OCI-LY7 (cell line): ENCODE measurements at regions of chr7 and their contacts with region 1.

Region 1: DNA sequence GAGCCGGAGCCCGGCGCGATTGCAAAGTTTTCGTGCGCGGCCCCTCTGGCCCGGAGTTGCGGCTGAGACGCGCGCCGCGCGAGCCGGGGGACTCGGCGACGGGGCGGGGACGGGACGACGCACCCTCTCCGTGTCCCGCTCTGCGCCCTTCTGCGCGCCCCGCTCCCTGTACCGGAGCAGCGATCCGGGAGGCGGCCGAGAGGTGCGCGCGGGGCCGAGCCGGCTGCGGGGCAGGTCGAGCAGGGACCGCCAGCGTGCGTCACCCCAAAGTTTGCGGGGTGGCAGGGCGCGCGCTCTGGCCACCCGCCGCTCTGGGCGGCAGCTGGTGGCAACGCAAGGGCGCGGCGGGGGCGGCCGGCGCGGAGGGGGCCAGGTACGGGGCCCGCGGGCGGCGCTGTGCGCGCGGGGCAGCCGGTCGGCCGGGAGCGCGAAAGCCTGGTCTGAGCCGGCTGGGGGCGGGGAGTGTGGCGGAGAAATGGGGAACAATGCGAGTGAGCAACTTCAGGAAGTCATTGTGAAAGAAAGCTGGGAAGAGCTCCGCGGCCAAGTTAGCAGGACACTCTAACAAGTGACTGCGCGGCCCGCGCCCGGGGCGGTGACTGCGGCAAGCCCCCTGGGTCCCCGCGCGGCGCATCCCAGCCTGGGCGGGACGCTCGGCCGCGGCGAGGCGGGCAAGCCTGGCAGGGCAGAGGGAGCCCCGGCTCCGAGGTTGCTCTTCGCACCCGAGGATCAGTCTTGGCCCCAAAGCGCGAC is at the start of gene IKZF1:
- DNase-seq: peak; percentile 70
- H3K4me3 ChIP-seq: peak within 1 kb of the TSS; percentile 71
- H3K27ac ChIP-seq: peak within 1 kb of the TSS; percentile 86
- H3K4me1 ChIP-seq: peaks cover 32% of the 10 kb centered on the region
- CTCF ChIP-seq: no peak
- total RNA-seq, gene IKZF1: 90.0 and 108 TPM in 2 replicates

Region 2: GRCh38 chr7:49894543-49894942 is 409.8 kb before region 1 on chr7:
- CTCF ChIA-PET with region 1: no interaction called
- POLR2A ChIA-PET with region 1: no interaction called
- intact Hi-C with region 1: no loop called
- DNase-seq: no peak
- H3K4me3 ChIP-seq: no peak overlapping the region
- H3K27ac ChIP-seq: no peak overlapping the region
- H3K4me1 ChIP-seq: peaks cover 3% of the 10 kb centered on the region
- CTCF ChIP-seq: no peak

Region 3: GRCh38 chr7:50056131-50056530 is 248.2 kb before region 1 on chr7:
- CTCF ChIA-PET with region 1: no interaction called
- POLR2A ChIA-PET with region 1: no interaction called
- intact Hi-C with region 1: no loop called
- DNase-seq: no peak
- H3K4me3 ChIP-seq: no peak overlapping the region
- H3K27ac ChIP-seq: no peak overlapping the region
- H3K4me1 ChIP-seq: no peaks in the 10 kb centered on the region
- CTCF ChIP-seq: no peak

Region 4: DNA sequence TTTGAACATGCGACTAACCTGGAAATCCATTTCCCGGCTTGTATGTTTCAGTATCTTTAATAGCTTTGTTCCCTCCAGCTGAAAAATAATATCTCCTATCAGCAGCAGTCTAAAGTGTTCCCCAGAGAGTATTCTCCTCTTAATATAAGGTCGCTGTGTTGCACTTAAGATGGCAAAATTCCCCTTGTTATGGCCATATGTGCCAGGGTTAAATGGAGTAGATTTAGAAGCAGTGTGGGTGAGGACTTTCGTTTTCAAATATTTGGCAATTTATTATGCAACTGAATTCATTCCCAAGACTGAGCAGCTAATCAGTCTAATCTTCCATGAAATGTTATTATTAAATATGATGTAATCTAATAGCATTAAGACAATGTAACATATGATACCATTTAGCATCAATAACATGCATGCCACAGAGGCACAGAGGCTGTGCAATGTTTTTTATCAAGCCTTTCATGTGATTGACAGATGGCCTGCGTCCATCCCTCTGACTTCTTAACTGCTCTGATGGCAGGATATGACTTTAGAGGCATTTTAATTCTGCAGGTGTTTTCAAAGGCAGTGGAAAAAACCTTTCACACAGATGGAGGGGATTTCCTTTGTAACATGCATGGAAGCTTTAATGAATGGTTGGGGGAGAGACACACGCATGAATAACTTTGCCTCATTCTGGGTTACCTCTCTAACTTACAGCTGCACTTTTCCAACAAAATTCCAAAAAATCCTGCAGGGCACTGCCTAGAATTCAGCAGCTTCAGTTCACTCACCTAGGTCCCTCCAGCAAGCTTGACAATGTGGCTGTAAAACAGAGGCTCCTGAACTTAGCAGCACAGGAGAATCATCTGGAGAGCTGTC is 156.2 kb before region 1 on chr7:
- CTCF ChIA-PET with region 1: interaction called, 3 read pairs
- POLR2A ChIA-PET with region 1: interaction called, 293 read pairs
- intact Hi-C with region 1: loop called (anchors 1 kb)
- DNase-seq: peak; percentile 97
- H3K4me3 ChIP-seq: peak overlapping the region; percentile 52
- H3K27ac ChIP-seq: peak overlapping the region; percentile 99
- H3K4me1 ChIP-seq: peaks cover 99% of the 10 kb centered on the region
- CTCF ChIP-seq: no peak

Region 5: GRCh38 chr7:50266635-50267386 is 37.5 kb before region 1 on chr7:
- CTCF ChIA-PET with region 1: interaction called, 4 read pairs
- POLR2A ChIA-PET with region 1: interaction called, 17 read pairs
- intact Hi-C with region 1: loop called (anchors 1 kb)
- DNase-seq: peak; percentile 76
- H3K4me3 ChIP-seq: peak overlapping the region; percentile 29
- H3K27ac ChIP-seq: peak overlapping the region; percentile 85
- H3K4me1 ChIP-seq: peaks cover 100% of the 10 kb centered on the region
- CTCF ChIP-seq: no peak

Region 6: GRCh38 chr7:50317221-50317678 is 12.9 kb after region 1 on chr7:
- CTCF ChIA-PET with region 1: no interaction called
- POLR2A ChIA-PET with region 1: interaction called, 23 read pairs
- intact Hi-C with region 1: no loop called
- DNase-seq: no peak
- H3K4me3 ChIP-seq: peak overlapping the region; percentile 0
- H3K27ac ChIP-seq: peak overlapping the region; percentile 10
- H3K4me1 ChIP-seq: peaks cover 73% of the 10 kb centered on the region
- CTCF ChIP-seq: peak; percentile 25; the same call in 1 of the 2 replicates

Region 7: DNA sequence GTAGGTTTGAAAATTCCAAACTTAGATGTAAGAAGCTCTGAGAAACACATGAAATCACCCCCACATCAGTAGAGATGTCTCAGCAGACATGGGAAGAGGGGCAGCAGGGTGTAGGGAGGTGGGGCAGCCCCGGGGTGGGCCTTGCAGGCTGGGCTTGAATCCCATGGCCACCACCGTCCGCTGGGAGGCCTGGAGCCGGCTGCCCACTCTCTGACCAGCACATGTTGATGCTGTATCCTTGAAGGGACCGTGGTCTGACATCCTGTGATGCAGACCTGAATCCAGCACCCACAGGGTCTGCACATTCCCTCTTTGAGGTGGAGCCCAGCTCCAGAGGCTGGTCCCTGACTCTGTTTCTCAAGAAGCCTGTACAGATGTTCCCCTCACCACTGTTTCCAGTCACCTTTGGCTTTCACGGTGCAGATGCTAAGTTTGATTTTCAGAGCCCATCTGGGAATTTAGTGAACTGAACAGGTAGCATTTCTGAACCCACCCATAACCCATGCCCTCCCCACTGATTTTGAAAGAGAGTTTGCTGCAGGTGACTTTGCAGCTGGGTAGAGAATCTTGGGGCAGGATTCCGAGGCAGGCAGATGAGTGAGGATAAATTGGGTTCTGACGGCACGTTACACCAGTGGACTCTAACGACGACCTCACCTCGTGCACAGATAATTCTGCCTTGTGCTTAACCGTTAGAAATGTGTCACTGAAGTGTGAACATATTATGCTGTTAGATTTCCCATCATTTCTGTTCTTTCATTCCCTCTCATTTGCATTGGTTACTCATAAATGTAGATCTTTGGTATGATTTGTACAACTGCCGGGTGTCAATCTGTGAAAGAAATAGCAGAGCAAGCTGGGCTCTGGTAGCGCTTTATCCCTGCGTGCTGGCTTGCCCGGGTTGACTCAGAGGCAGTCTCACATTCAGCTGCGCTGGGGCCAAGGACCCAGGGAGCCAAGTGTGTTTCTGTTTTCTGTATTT is 45.9 kb after region 1 on chr7:
- CTCF ChIA-PET with region 1: no interaction called
- POLR2A ChIA-PET with region 1: interaction called, 28 read pairs
- intact Hi-C with region 1: no loop called
- DNase-seq: no peak
- H3K4me3 ChIP-seq: peak overlapping the region; percentile 12
- H3K27ac ChIP-seq: peak overlapping the region; percentile 42
- H3K4me1 ChIP-seq: peaks cover 57% of the 10 kb centered on the region
- CTCF ChIP-seq: no peak

Region 8: DNA sequence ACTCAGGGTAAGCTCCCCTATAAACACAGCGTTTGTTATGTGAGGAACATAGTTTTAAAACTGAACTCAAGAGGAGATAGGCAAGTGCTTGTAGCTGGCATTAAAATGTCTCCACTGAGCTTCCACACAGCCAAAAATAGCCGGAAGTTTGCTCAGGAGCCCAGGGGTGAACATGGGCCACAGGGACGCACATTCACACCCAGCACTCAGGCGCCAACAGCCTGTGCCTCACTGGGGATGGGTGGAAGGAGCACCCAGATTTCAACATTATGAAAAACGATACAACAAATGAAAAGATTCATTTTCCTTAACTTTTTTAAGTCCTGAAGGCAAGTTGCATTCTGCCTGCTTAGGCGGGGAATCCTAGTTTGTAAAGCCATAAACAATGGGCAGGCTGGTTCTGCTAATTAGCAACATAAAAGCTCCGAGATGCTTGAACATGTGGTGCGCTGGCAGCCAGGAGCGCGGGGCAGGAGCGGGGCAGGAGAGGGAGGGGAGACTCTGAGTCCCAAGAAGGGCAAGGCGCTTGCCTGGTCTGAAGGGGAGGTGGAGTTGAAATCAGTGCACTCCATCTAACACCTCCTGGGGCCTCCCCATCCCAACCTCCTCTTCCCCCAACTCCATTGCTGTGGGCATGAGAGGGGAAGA is 776.4 kb after region 1 on chr7:
- CTCF ChIA-PET with region 1: no interaction called
- POLR2A ChIA-PET with region 1: no interaction called
- intact Hi-C with region 1: no loop called
- DNase-seq: no peak
- H3K4me3 ChIP-seq: no peak overlapping the region
- H3K27ac ChIP-seq: no peak overlapping the region
- H3K4me1 ChIP-seq: no peaks in the 10 kb centered on the region
- CTCF ChIP-seq: no peak